Left ventricle myocardium superior (tissue), 1 donor: ENCODE measurements at regions of chr12 and their contacts with region 1.

Region 1: GRCh38 chr12:55188974-55189556 is 31.8 kb upstream of the OR10A7 start:
- DNase-seq: no peak
- ATAC-seq: peak; percentile 65

Region 2: DNA sequence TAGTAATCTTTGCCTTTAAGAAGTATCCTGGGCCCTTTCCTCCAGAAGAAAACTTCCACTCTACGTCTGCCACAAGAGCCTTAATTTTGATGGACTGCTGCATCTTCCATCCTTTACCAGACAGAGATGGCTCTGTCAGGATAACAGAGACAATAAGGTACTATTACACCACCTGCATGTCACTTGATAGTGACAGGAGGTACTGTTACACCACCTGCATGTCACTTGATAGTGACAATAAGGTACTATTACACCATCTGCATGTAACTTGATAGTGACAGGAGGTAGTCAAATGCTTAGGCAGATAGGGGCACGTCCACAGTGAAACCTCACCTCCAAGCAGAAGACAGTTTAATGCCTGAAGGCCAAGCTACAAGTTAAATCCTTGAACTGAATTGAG is 69.2 kb after region 1 on chr12:
- intact Hi-C with region 1: no loop called
- DNase-seq: no peak
- ATAC-seq: no peak

Region 3: DNA sequence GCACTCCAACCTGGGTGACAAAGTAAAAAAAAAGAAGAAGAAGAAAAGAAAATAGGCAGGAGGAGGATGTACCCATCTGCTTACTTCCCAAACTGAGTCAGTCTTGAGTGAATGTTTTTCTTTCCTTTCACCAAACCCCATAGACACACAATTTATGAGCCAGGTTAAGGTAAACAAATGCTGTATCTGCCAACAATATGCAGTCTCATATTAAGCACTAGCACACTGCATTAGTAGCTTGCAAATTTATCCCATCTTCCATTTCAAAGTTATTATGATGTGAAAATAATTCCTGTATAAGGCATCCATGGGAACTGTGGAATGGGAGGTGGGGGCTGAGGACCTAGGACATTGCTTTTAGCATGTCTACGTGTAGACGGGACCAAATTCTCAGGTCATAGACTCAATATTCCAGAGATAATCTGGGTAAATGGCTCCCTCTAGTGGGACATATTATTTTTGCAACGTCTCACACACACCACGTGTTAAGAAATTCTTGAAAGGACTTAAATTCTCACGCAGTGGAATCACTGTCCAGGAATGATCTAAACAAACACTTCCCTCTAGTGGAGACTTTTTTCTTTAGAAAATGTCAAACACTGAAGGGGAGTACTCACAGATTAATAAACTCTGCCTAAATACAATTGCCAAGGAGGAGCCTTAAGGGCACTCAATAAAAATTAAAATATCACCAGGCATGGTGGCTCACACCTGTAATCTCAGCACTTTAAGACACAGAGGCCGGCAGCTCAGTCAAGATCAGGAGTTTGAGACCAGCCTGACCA is 430.5 kb after region 1 on chr12:
- intact Hi-C with region 1: loop called (anchors 1 kb)
- DNase-seq: no peak
- ATAC-seq: peak; percentile 92